Cardiac septum (tissue), 1 donor: ENCODE measurements at regions of chr16 and their contacts with region 1.

Region 1: DNA sequence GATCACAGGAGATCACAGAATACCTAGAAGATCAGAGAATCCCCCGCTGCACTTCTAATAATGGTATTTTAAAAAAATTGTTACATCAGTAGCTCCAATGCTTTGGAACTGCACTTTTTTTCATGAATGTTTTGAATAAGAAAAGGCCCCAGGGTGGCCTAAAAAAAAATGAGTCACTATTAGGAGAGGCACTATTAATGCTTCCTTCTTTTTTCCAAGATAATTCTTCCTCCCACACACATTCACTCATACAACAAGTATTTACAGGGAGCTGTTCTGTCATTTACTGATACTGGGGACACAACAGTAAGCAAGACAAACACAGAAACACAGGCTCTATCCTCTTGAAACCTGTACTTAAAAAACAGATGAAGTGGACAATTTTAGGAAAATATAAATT is 675 bp upstream of the PDZD9 start:
- DNase-seq: no peak

Region 2: DNA sequence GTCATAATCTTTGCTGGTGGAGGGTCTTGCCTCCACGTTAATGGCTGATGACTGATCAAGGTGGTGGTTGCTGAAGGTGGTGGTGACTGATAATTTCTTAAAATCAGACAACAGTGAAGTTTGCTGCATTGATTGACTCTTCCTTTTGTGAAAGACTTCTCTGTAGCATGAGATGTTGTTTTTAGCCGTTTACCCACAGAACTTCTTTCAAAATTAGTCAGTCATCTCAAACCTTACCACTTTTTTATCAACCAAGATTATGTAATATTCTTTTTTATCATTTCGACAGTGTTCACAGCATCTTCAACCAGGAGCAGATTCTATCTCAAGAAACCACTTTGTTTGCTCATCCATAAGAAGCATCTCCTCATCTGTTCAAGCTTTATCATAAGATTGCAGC is 42.5 kb before region 1 on chr16:
- intact Hi-C with region 1: no loop called
- DNase-seq: no peak

Region 3: GRCh38 chr16:22077700-22078313 is 76.2 kb after region 1 on chr16:
- intact Hi-C with region 1: loop called (anchors 1 kb)
- DNase-seq: no peak

Region 4: GRCh38 chr16:22098405-22099255 is 97.0 kb after region 1 on chr16:
- intact Hi-C with region 1: loop called (anchors 5 kb)
- DNase-seq: no peak

Region 5: GRCh38 chr16:22264786-22265185 is 263.2 kb after region 1 on chr16:
- intact Hi-C with region 1: no loop called
- DNase-seq: no peak

Region 6: DNA sequence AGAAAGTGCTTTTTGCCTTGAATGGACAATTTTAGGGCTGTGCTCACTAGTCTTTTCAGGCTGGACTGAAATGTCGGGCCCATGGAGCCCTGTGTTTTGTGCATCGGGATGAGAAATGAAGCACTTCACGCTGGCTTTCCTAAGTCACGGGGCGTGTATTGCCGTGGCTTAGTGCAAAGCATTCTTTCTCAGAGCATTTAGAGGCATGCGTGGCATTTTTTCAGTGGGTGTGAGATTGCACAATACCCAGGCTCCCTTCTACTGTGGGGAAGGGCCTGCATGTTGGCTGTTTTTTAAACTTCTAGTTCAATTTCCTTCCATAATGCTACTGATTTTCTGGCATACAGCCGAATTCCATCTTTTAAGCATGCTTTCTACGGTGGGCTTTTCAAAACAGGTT is 283.0 kb after region 1 on chr16:
- intact Hi-C with region 1: no loop called
- DNase-seq: no peak

Region 7: GRCh38 chr16:22297114-22297878 is 295.7 kb after region 1 on chr16 and contains the start of gene POLR3E:
- intact Hi-C with region 1: loop called (anchors 5 kb)
- DNase-seq: peak; percentile 100
- total RNA-seq, gene POLR3E: 32.7 TPM